Common myeloid progenitor, CD34-positive (primary cell): ENCODE measurements at regions of chr11 and their contacts with region 1.

Region 1: DNA sequence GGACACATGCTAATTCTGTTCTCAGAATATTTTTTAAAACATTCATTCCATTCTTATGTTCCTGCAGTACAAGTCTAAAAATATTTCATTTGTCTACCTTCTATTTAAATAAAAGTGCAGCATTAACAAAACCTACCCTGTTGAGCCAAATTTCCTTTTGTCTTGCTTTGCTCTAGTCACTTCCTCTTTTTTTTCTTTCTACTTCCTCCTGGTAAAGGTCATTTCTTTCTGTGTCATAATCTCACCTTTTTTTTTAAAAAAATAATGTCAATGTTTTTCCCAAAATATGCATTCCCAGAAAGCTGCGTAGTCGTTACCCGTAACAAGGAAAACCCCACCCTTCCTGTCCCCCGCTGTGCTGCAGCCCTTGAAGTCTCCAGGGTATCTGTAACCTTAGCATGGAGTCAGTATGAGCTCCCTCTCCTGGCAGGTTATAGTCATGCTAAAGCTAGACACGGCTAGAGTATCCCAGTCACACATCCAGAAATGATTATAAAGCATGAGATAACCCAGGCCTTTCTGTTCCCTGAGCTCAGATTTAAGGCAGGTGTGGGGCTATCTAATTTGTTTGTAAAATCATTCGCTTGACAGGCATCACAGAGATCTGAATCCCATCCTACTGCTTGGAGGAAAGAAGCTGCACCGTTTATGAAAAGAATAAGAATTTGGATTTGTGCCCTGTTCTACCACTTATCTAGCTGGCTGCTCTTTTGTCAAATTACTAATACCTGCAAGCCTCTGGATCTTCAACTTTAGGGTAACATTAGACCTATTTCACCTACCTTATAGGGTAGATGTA is 51.1 kb upstream of the EED start:
- DNase-seq: peak; percentile 81 to 89 (median 89)
- H3K4me3 ChIP-seq: peak overlapping the region in 4 of 7 experiments; percentile 19 to 66 (median 48)
- H3K27ac ChIP-seq: peak overlapping the region in 1 of 2 experiments; percentile 74
- H3K4me1 ChIP-seq: peaks cover 12 to 39% (median 26%) of the 10 kb centered on the region in 4 experiments
- H3K27me3 ChIP-seq: no peaks in the 10 kb centered on the region

Region 2: GRCh38 chr11:86052693-86053641 is 140.5 kb before region 1 on chr11:
- CTCF ChIA-PET with region 1: interaction called, 12 read pairs
- POLR2A ChIA-PET with region 1: no interaction called
- DNase-seq: no peak
- H3K4me3 ChIP-seq: no peak overlapping the region
- H3K27ac ChIP-seq: no peak overlapping the region
- H3K4me1 ChIP-seq: peaks cover 9 to 19% (median 13%) of the 10 kb centered on the region in 4 experiments
- H3K27me3 ChIP-seq: no peaks in the 10 kb centered on the region

Region 3: DNA sequence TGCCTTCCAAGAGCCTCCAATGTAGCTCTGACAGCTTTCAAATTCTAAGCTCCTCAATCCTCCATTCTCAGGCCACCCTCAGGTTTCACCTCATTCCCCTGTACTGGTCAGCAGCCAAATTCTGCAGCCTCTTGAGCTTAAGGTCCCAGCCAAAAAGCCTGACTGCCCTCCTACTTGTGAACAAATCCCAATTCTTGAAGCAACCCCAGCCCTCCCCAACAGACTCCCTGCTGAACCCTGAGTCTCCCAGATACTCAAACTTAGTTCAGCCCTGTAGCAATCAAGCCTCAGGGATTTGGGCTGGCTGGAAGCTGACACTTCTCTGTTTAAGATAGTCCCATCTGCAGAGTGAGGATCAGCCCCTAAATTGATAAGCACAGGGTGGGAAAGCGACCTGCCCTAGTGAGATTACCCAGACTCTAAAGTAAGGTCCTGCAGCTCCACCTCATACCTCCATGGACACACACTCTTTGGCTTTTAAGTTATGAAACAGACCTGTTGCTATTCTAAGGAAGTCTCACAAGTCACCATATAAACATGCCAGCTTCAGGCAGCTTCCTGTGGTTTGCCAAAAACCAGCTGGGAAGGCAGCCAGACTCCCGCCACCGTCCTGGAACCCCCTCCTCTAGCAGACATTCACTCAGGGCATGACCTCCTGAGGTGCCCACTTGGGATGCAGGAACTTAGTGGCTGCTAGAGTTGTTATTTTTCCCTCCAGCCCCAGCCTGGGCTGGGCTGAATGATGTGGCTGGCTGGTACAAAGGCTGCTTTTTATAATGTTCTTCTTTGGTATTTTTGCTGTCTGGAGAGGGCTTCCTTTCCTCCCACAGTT is 42.1 kb before region 1 on chr11:
- CTCF ChIA-PET with region 1: interaction called, 10 read pairs
- POLR2A ChIA-PET with region 1: no interaction called
- DNase-seq: peak; percentile 32 to 85 (median 84)
- H3K4me3 ChIP-seq: peak overlapping the region in 4 of 7 experiments; percentile 5 to 52 (median 23)
- H3K27ac ChIP-seq: peak overlapping the region; percentile 27 to 60
- H3K4me1 ChIP-seq: peaks cover 15 to 59% (median 37%) of the 10 kb centered on the region in 4 experiments
- H3K27me3 ChIP-seq: no peaks in the 10 kb centered on the region

Region 4: DNA sequence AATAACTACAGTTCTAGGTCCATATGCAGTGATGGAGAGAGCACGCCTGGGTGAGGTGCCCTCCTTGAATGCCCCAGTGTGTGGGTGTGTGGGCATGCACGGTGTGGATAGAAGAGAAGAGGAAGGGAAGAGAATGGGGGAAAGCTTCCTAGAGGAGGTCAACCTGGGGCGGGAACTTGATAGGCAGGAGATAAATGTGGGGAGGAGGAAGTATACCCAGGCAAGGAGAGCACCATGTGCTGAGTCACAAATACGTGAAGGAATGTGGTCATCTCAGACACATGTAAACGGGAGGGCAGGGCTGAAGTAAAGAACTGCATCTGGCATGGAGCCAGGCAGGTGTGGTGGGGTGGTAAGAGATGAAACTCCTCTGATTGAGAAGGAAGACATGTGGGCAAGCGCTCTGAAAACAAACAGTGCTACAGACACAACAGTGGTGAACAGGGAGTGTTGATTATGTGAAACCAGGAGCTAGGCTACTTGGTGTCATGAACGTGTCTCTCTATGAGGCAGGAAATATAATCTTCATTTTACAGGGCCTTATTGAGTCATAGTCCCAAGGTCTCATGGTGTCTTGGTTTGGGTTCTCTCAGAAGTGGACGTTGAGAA is 10.4 kb before region 1 on chr11:
- CTCF ChIA-PET with region 1: interaction called, 21 read pairs
- POLR2A ChIA-PET with region 1: no interaction called
- DNase-seq: no peak
- H3K4me3 ChIP-seq: no peak overlapping the region
- H3K27ac ChIP-seq: peak overlapping the region in 1 of 2 experiments; percentile 62
- H3K4me1 ChIP-seq: peaks cover 30 to 49% (median 37%) of the 10 kb centered on the region in 4 experiments
- H3K27me3 ChIP-seq: no peaks in the 10 kb centered on the region

Region 5: GRCh38 chr11:86244522-86245368 is 51.2 kb after region 1 on chr11 and contains the start of gene EED:
- CTCF ChIA-PET with region 1: no interaction called
- POLR2A ChIA-PET with region 1: no interaction called
- DNase-seq: peak; percentile 97 to 99 (median 99)
- H3K4me3 ChIP-seq: peak within 1 kb of the TSS; percentile 75 to 100 (median 97)
- H3K27ac ChIP-seq: peak within 1 kb of the TSS; percentile 97 to 99
- H3K4me1 ChIP-seq: peaks cover 19 to 40% (median 30%) of the 10 kb centered on the region in 4 experiments
- H3K27me3 ChIP-seq: no peaks in the 10 kb centered on the region

Region 6: GRCh38 chr11:86314646-86315045 is 121.2 kb after region 1 on chr11:
- CTCF ChIA-PET with region 1: no interaction called
- POLR2A ChIA-PET with region 1: no interaction called
- DNase-seq: no peak
- H3K4me3 ChIP-seq: no peak overlapping the region
- H3K27ac ChIP-seq: no peak overlapping the region
- H3K4me1 ChIP-seq: no peaks in the 10 kb centered on the region
- H3K27me3 ChIP-seq: no peaks in the 10 kb centered on the region

Region 7: DNA sequence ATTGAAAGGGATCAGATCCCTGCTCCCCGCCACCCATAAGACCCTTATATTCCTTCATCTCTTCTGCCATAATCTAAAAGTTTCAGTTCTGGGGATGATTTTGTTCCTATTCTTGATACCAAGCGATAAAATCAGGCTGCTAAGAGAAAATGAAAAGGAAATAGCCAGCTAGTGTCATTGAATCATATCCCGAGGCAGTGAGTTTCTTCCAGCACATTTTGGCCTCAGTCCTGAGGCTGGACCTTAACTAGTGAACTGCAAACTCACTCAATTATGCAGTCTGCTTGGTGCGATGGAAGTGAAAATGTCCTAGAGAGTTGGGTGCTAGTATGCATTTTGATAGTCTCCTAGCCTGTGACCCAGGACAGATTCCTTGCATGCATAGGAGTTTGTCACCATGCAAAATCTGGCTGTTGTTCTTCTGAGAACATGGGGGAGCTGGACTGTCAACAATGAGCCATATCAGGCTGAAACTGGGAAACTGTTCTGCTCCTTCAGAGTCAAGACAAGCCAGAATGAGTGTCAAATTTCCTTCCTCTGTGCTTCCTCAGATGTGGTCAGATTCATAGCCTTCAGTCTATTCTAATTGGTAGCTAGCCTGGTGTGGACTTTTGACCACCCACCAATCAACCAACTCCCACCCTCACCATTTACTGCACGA is 284.1 kb after region 1 on chr11:
- CTCF ChIA-PET with region 1: no interaction called
- POLR2A ChIA-PET with region 1: no interaction called
- DNase-seq: no peak
- H3K4me3 ChIP-seq: no peak overlapping the region
- H3K27ac ChIP-seq: no peak overlapping the region
- H3K4me1 ChIP-seq: no peaks in the 10 kb centered on the region
- H3K27me3 ChIP-seq: no peaks in the 10 kb centered on the region